ENCODE measurements at regions of chr3 and their contacts with region 1.

Region 1: GRCh38 chr3:122067214-122067550 is 12.0 kb downstream of the CD86 start:
- DNase-seq: no peak
- H3K4me3 ChIP-seq: no peak overlapping the region
- H3K27ac ChIP-seq: no peak overlapping the region
- H3K4me1 ChIP-seq: no peaks in the 10 kb centered on the region
- H3K27me3 ChIP-seq: no peaks in the 10 kb centered on the region
- CTCF ChIP-seq: no peak
- POLR2A ChIP-seq: no peak

Region 2: DNA sequence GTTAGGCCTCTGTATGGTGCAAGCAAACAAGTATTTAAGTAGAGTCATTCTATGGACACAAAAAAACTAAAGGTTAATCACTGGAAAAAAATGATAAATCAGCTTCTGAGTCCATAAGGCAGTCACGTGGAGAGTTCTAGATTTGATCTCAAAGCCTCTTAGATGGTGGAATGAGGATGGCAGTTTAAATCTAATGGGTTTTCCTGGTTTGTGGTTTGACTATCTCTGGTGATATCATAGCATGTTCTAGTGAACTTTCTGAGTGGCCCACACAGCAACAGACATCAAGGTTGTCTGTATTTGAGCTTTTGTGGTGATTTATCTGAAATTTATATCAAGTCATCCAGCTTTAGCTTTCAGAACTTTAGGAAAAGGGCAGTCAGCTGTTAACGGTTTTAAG is 97.6 kb before region 1 on chr3:
- intact Hi-C with region 1: no loop called
- DNase-seq: no peak
- H3K4me3 ChIP-seq: no peak overlapping the region
- H3K27ac ChIP-seq: no peak overlapping the region
- H3K4me1 ChIP-seq: no peaks in the 10 kb centered on the region
- H3K27me3 ChIP-seq: no peaks in the 10 kb centered on the region
- CTCF ChIP-seq: no peak
- POLR2A ChIP-seq: no peak

Region 3: GRCh38 chr3:122004991-122005565 is 62.1 kb before region 1 on chr3:
- intact Hi-C with region 1: loop called (anchors 2 kb)
- DNase-seq: no peak
- H3K4me3 ChIP-seq: no peak overlapping the region
- H3K27ac ChIP-seq: no peak overlapping the region
- H3K4me1 ChIP-seq: no peaks in the 10 kb centered on the region
- H3K27me3 ChIP-seq: no peaks in the 10 kb centered on the region
- CTCF ChIP-seq: no peak
- POLR2A ChIP-seq: no peak

Region 4: GRCh38 chr3:122146466-122146865 is 79.3 kb after region 1 on chr3:
- intact Hi-C with region 1: no loop called
- DNase-seq: no peak
- H3K4me3 ChIP-seq: no peak overlapping the region
- H3K27ac ChIP-seq: no peak overlapping the region
- H3K4me1 ChIP-seq: no peaks in the 10 kb centered on the region
- H3K27me3 ChIP-seq: no peaks in the 10 kb centered on the region
- CTCF ChIP-seq: no peak
- POLR2A ChIP-seq: no peak

Region 5: GRCh38 chr3:122760453-122761271 is 693.5 kb after region 1 on chr3:
- intact Hi-C with region 1: no loop called
- DNase-seq: no peak
- H3K4me3 ChIP-seq: no peak overlapping the region
- H3K27ac ChIP-seq: no peak overlapping the region
- H3K4me1 ChIP-seq: no peaks in the 10 kb centered on the region
- H3K27me3 ChIP-seq: no peaks in the 10 kb centered on the region
- CTCF ChIP-seq: no peak
- POLR2A ChIP-seq: no peak

Measured in breast epithelium (tissue), 4 donors.